ENCODE measurements at regions of chr2 and their contacts with region 1.

Region 1: GRCh38 chr2:86221066-86221684 is 21.9 kb downstream of the MRPL35 start:
- DNase-seq: peak; percentile 77
- H3K4me3 Mint-ChIP-seq: no peak overlapping the region
- H3K27ac Mint-ChIP-seq: peak overlapping the region; percentile 28
- H3K4me1 Mint-ChIP-seq: peaks cover 60% of the 10 kb centered on the region
- H3K27me3 Mint-ChIP-seq: no peaks in the 10 kb centered on the region

Region 2: DNA sequence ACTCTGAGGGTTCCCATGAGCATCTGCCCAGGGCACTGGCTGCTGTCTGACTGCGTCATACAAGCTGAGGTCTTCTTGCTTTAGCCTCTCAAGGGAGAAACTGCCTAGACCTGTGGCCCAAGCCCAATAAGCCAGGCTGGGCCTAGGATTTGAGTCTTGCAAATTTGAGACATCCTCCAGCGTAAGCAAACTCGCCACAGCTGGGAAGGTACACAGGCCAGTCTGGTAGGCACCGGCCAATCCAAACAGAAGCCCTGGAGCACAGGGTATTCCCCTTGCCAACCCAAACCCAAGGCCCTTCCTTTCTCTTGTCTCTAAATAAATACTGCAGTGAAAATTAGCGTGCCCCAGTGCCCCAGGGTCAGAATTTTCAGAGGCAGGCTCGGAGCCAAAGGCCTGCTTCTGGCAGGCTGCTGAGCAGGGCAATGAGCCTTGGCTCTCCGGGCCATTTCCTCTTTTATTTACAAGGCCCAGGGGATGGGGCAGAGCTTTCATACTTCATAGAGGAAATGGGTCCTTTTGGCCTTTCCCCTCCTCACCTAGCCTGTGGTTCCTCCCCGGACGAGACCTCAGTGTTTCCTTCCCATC is 148.8 kb before region 1 on chr2:
- CTCF ChIA-PET with region 1: no interaction called
- DNase-seq: no peak
- H3K4me3 Mint-ChIP-seq: no peak overlapping the region
- H3K27ac Mint-ChIP-seq: no peak overlapping the region
- H3K4me1 Mint-ChIP-seq: peaks cover 32% of the 10 kb centered on the region
- H3K27me3 Mint-ChIP-seq: no peaks in the 10 kb centered on the region

Region 3: DNA sequence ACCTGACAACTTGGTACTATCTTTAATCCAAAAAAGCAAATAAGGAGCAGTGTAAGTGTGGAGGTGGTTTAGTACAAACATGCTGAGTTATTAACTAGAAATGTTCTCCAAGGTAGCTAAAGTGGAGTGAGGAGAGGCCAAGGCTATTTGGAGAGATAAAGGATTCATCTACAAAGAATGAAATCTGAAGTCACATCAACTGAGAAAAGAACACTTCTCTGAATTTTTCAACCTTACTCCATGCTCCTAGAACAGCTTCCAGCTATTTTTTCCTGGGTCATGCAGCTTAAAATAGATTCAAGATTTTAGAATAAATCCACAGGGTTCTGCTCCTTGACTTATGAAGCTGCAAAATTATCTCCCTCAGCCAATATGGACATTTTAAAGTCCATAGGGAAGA is 44.6 kb before region 1 on chr2:
- CTCF ChIA-PET with region 1: no interaction called
- DNase-seq: no peak
- H3K4me3 Mint-ChIP-seq: no peak overlapping the region
- H3K27ac Mint-ChIP-seq: peak overlapping the region; percentile 9
- H3K4me1 Mint-ChIP-seq: peaks cover 20% of the 10 kb centered on the region
- H3K27me3 Mint-ChIP-seq: no peaks in the 10 kb centered on the region

Region 4: GRCh38 chr2:86238354-86238753 is 17.2 kb after region 1 on chr2:
- CTCF ChIA-PET with region 1: interaction called, 14 read pairs
- DNase-seq: peak; percentile 58
- H3K4me3 Mint-ChIP-seq: no peak overlapping the region
- H3K27ac Mint-ChIP-seq: no peak overlapping the region
- H3K4me1 Mint-ChIP-seq: peaks cover 18% of the 10 kb centered on the region
- H3K27me3 Mint-ChIP-seq: peaks cover 27% of the 10 kb centered on the region

Region 5: DNA sequence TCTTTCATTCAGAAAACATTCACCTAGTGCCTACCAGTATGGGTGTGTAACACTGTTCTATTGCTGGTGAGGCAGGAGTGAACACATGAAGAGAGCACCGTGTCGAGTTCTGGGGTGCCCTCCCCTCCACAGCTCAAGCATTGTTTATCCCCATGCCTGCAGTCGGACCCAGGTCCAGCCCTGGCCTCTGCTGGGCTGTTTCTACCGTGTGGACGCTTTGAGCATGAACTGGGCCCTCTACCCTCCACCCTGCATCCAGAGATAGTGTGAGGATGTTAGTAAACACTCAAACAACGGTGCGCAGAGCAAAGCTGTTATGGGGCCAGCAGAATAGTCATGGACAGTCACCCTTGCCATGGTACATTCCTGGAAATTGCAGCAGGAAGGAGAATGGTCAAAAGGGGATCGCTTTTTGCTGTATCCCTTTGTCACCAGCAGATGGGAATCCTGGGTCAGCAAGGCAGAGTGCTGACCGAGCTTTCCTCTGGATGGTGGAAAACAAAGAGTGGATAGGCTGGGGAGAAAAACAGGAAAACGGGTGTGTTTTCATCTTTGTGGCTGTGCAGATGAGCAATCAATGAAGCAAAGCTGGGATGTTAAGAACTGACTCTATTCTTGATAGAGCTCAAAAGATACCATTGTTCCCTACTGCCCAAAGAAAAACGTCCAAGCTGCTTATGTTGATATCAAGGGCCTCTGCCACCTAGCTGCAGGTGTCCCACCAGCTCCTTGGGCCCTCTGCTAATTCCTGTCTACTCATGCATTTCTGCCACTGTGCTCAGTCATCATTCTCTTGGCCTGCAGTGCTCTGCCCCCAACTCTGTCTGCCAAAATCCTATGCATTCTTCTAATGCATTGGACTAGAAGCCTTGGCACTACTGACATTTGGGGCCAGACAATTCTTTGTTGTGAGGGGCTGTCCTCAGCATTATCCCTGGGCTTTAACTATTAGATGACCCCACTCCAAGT is 77.5 kb after region 1 on chr2:
- CTCF ChIA-PET with region 1: interaction called, 56 read pairs
- DNase-seq: no peak
- H3K4me3 Mint-ChIP-seq: no peak overlapping the region
- H3K27ac Mint-ChIP-seq: no peak overlapping the region
- H3K4me1 Mint-ChIP-seq: no peaks in the 10 kb centered on the region
- H3K27me3 Mint-ChIP-seq: peaks cover 52% of the 10 kb centered on the region

Region 6: GRCh38 chr2:86368161-86368824 is 147.1 kb after region 1 on chr2:
- CTCF ChIA-PET with region 1: interaction called, 45 read pairs
- DNase-seq: peak; percentile 60
- H3K4me3 Mint-ChIP-seq: peak overlapping the region; percentile 22
- H3K27ac Mint-ChIP-seq: peak overlapping the region; percentile 40
- H3K4me1 Mint-ChIP-seq: peaks cover 50% of the 10 kb centered on the region
- H3K27me3 Mint-ChIP-seq: peaks cover 9% of the 10 kb centered on the region

Measured in activated naive CD4-positive, alpha-beta T cell treated with anti-CD3 and anti-CD28 coated beads, Interleukin-2, amount 10 ng/mL, durations not matched to agents 7 days and 5 days (primary cell).